ENCODE measurements at regions of chr18 and their contacts with region 1.

Region 1: DNA sequence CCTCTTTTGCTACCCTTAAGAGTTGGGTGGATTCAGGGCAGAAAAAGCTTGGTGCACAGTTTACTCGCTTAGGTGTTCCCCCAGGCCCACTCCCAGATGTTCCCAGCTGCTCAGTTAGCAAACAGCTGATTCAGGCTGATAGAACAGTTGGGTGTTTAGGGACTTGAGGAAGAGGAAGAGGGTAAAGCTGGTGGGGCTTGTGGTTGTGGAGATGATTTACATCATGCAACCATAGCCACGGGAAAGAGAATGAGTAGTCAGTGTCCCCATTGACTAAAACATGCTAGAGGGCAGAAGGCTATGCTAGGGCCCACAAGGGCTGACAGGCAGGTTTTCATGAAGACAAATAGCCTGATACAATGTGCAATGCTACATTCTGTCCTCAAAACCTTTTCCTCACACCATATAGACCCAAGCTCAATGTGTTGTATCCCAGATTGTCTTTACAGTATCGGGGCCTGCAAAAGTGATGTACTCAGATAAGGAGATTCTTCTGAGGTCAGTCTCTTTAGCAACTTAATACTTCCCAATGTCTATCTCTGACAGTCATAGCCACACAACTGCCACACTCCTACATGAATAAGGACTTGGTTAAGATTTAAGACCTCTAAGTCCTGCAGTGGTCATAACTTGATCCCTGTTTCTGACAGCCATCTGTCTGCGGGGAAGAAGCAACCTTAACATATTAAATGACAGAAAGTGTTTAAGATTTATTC is 15.6 kb downstream of the COLEC12 start:
- DNase-seq: no peak
- H3K4me3 ChIP-seq: no peak overlapping the region
- H3K27ac ChIP-seq: no peak overlapping the region
- H3K27me3 ChIP-seq: peaks cover 0 to 10% (median 0%) of the 10 kb centered on the region in 45 donors
- CTCF ChIP-seq: no peak

Region 2: GRCh38 chr18:331221-331821 is 153.6 kb before region 1 on chr18:
- intact Hi-C with region 1: loop called in 1 of 2 experiments (anchors 10 kb)
- DNase-seq: peak in 1 of 10 donors; percentile 15
- H3K4me3 ChIP-seq: peak overlapping the region in 1 of 59 donors; percentile 8
- H3K27ac ChIP-seq: peak overlapping the region in 39 of 59 donors; percentile 1 to 76 (median 51)
- H3K27me3 ChIP-seq: no peaks in the 10 kb centered on the region
- CTCF ChIP-seq: no peak

Measured in dorsolateral prefrontal cortex (tissue), 120 donors.